AG04449 (cell line): ENCODE measurements at regions of chr2 and their contacts with region 1.

Region 1: GRCh38 chr2:174771631-174772471 is 7.6 kb upstream of the CHRNA1 start:
- DNase-seq: no peak
- H3K4me3 ChIP-seq: no peak overlapping the region
- CTCF ChIP-seq: peak; percentile 86

Region 2: DNA sequence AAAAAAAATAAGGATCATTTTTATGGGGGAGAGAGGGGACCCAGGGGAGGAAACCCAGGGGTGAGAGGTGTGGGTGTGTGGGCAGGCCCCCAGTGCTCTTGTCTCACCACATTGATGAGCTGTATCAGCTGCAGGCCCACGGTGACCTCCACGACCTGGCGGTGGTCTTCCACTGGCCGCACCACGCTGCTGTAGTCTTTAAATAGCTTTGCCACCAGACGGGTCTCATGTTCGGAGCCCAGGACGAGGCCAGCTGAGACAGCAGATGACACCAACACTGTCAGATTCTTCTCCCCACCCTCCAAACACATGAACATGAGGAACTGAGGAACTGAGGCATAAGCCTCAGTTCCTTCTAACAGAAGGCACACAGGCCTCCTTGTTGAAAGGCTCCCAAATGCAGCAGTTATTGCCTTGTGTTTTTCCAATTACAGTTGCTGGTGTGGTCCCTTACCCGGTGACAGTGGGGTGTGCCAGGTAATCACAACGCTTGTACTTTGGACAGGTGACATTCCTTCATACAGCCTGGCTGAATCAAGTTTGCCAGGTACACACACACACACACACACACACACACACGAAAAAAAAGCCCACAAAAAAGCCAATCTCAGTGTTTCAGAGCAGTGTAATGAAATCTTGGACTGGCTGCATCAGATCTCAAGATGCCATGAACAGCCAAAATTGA is 12.3 kb before region 1 on chr2:
- CTCF ChIA-PET with region 1: interaction called, 53 read pairs
- POLR2A ChIA-PET with region 1: no interaction called
- DNase-seq: no peak
- H3K4me3 ChIP-seq: no peak overlapping the region
- CTCF ChIP-seq: no peak

Region 3: DNA sequence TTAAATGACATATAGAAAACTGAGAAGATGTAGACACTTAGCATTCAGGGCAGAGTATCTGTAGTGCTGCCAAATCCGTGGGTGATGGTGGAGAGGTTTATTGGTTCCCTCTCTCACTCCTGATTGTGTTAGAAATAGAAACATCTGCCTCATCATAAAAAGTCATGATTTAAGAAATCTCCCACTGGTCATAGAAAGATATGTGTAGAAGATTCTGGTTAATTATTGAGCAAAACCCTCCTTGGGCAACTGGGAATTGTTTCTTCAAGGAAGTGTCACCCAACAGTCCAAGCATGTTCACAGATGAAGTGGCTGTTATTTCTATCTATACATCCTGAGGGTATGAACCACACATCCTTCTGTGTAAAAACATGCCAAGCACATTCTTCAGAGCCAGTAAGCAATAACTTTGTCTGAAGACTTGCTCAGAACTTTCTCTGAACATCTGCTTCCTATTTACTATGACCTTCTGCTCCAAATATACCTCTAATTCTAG is 26.0 kb after region 1 on chr2:
- CTCF ChIA-PET with region 1: interaction called, 10 read pairs
- POLR2A ChIA-PET with region 1: no interaction called
- DNase-seq: peak; percentile 80
- H3K4me3 ChIP-seq: no peak overlapping the region
- CTCF ChIP-seq: no peak

Region 4: GRCh38 chr2:174846941-174847938 is 75.4 kb after region 1 on chr2:
- CTCF ChIA-PET with region 1: interaction called, 23 read pairs
- POLR2A ChIA-PET with region 1: interaction called, 3 read pairs
- DNase-seq: peak; percentile 82
- H3K4me3 ChIP-seq: peak overlapping the region; percentile 57
- CTCF ChIP-seq: no peak

Region 5: DNA sequence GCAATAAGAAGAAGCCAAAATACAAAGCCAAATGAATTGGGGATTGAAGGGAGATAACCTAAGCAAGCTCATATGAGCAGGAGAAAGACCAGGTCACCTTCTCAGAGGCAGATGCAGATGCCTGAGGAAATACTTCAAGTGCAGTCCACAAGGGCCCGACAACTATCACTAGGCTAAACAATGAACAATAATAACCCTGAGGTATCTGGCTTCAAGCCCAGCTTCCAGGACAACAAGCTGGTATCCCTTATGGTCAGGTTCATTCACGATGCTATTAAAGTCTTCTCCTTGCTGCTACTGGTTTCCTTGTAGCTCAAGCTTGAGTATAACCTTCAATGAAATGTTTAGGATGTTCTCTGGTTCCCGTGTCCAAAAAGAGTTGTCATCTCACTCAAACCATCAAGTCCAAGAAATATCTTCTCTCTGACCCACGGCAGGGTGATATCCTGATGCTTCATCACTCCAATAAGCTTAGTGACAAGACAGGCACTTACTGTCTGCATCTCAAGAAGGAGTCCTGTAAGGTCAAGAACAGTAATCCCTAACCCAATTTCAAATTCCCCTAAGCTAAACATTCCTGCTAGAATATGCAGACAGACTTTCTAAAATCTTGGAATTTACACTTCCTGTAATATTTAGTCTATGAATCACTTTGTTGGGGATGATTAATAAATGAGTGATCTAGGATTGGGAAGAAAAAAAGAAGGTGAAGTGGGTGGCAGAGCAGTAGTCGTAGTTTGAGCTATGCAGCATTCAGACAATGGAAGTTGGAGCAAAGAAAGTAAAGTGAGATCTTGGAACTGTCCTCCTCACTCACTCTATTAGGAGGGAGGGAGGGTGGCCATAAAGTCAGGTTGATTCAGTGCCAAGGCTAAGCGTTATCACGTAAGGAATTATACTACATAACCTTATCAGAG is 200.3 kb after region 1 on chr2:
- CTCF ChIA-PET with region 1: interaction called, 35 read pairs
- POLR2A ChIA-PET with region 1: interaction called, 5 read pairs
- DNase-seq: no peak
- H3K4me3 ChIP-seq: no peak overlapping the region
- CTCF ChIP-seq: no peak

Region 6: DNA sequence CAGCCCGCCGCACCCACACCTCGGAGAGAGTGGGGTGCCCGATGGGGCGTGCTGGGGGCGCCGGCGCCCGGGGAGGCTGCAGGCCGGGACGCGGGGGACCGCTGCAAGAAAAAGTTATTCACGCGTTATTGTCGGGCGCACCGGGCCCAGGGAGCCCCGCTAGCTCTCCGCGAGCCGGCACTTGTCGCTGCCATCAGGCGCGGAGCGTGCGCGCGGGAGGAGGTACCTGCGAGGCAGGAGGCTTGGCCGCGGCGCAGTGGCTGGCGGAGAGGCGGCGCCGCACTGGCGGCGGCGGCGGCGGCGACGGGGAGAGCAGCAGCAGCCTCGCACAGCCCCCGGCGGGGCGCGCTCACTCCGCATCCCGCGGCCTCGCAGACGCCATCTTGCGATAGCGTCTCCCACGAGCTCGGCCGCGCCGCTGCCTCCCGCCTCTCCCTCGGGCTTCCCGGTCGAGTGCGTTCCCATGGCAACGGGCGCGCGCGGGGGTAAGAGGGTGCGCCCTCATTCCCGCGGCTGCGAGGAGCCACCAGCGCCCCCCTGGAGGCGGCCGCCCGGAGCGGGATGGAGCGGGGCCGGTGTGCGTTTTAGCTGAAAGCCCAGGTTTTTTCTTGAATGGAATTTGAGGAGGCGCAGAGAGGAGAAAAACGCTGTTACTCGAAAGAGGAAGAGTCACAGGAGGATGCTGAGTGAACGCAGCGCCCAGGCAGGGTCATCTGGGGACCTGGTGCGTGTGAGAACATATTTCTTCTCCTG is 233.3 kb after region 1 on chr2 and contains the start of gene CHN1:
- CTCF ChIA-PET with region 1: interaction called, 18 read pairs
- POLR2A ChIA-PET with region 1: no interaction called
- DNase-seq: no peak
- H3K4me3 ChIP-seq: peak within 1 kb of the TSS; percentile 64
- CTCF ChIP-seq: peak; percentile 4

Region 7: DNA sequence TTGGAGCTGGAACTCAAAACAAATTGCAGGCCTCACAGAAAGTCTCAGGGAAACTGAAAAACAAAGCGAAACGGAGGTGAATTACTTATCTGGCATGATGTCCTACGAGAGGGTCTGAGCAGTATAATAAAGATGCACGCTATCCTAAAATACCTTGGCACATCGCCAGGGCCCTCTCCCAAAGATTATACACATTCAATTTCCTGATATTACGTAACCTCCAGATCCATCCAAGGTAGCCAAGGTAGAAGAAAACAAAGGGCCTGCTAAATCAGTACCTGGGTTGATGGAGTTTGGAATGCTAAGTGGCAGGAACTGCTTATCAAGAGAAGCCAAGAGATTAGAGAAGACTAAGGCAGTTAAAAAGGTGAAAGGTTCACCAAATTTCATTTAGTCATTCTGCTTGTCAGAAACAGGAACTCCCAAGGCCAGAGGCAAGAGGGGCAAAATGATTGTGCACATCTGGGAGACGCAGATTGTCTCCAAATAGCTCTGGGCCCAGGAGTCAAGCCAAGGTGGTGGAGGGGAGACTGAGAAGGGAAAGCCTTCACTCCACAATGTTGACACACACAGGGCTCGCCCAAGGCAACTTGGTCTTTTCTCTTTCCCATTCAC is 646.5 kb after region 1 on chr2:
- CTCF ChIA-PET with region 1: no interaction called
- POLR2A ChIA-PET with region 1: no interaction called
- DNase-seq: no peak
- H3K4me3 ChIP-seq: no peak overlapping the region
- CTCF ChIP-seq: no peak